BJ (cell line): ENCODE measurements at regions of chr1 and their contacts with region 1.

Region 1: GRCh38 chr1:201792534-201793305 is 36.2 kb upstream of the IPO9 start:
- DNase-seq: peak; percentile 29
- H3K4me3 ChIP-seq: no peak overlapping the region
- H3K27me3 ChIP-seq: no peaks in the 10 kb centered on the region
- CTCF ChIP-seq: peak; percentile 97

Region 2: GRCh38 chr1:201530741-201531531 is 261.8 kb before region 1 on chr1:
- CTCF ChIA-PET with region 1: interaction called, 103 read pairs
- POLR2A ChIA-PET with region 1: interaction called, 3 read pairs
- DNase-seq: peak; percentile 81
- H3K4me3 ChIP-seq: no peak overlapping the region
- H3K27me3 ChIP-seq: no peaks in the 10 kb centered on the region
- CTCF ChIP-seq: peak; percentile 89

Region 3: GRCh38 chr1:201625226-201625761 is 167.4 kb before region 1 on chr1:
- CTCF ChIA-PET with region 1: interaction called, 11 read pairs
- POLR2A ChIA-PET with region 1: no interaction called
- DNase-seq: peak; percentile 97
- H3K4me3 ChIP-seq: no peak overlapping the region
- H3K27me3 ChIP-seq: no peaks in the 10 kb centered on the region
- CTCF ChIP-seq: peak; percentile 57

Region 4: DNA sequence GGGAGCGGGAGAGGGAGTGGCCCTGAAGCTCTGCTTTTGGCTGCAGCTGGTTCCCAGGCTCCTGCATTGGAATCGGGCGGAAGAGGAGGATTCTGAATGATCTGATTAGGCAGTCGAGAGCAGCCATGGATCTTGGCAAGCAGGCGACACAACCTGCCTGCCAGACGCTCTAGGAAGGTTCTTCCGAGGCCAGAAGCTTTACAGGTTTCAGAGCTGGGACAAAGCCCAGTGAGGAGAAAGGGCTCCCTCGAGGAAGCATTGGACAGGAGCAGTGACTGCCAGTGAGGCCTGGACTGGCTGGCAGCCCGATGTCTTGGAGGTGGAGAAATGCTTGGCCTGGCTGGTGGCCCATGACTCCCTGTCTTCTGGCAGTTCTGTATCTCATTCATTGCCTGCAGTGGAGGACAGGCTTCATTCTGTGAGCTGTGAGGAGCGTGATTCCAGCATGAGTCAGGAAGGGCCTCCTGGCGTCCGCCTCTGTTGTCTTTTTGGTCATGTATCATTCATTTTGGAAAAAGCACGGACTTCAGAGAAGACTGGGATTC is 96.4 kb before region 1 on chr1:
- CTCF ChIA-PET with region 1: interaction called, 15 read pairs
- POLR2A ChIA-PET with region 1: no interaction called
- DNase-seq: peak; percentile 85
- H3K4me3 ChIP-seq: no peak overlapping the region
- H3K27me3 ChIP-seq: no peaks in the 10 kb centered on the region
- CTCF ChIP-seq: 0 out of 2 replicates have a peak, but pooled peaks have one; percentile 10

Region 5: GRCh38 chr1:201719812-201720521 is 72.8 kb before region 1 on chr1:
- CTCF ChIA-PET with region 1: interaction called, 495 read pairs
- POLR2A ChIA-PET with region 1: no interaction called
- DNase-seq: peak; percentile 68
- H3K4me3 ChIP-seq: no peak overlapping the region
- H3K27me3 ChIP-seq: no peaks in the 10 kb centered on the region
- CTCF ChIP-seq: no peak

Region 6: DNA sequence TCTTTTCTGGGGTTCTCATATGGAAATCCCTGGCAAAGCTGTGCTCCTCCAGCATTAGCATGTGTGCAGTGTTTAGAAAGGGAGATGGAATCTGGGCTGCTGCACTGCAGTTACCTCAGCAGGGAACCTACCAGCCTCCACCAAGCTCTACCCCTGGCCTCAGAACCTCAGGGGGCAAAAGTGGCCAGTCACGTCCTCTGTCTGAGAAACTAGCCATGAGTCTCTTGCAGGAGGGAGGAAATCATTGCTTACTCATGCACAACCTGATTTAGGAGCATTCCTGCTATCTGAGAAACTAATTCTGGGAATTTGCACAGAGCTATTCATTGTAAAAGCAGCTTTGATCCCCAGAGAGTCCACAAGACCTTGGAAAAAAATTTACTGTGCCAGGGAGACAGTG is 44.4 kb before region 1 on chr1:
- CTCF ChIA-PET with region 1: interaction called, 64 read pairs
- POLR2A ChIA-PET with region 1: no interaction called
- DNase-seq: peak; percentile 81
- H3K4me3 ChIP-seq: no peak overlapping the region
- H3K27me3 ChIP-seq: no peaks in the 10 kb centered on the region
- CTCF ChIP-seq: no peak

Region 7: GRCh38 chr1:201766131-201766866 is 26.4 kb before region 1 on chr1:
- CTCF ChIA-PET with region 1: interaction called, 21 read pairs
- POLR2A ChIA-PET with region 1: interaction called, 3 read pairs
- DNase-seq: peak; percentile 86
- H3K4me3 ChIP-seq: no peak overlapping the region
- H3K27me3 ChIP-seq: no peaks in the 10 kb centered on the region
- CTCF ChIP-seq: no peak

Region 8: DNA sequence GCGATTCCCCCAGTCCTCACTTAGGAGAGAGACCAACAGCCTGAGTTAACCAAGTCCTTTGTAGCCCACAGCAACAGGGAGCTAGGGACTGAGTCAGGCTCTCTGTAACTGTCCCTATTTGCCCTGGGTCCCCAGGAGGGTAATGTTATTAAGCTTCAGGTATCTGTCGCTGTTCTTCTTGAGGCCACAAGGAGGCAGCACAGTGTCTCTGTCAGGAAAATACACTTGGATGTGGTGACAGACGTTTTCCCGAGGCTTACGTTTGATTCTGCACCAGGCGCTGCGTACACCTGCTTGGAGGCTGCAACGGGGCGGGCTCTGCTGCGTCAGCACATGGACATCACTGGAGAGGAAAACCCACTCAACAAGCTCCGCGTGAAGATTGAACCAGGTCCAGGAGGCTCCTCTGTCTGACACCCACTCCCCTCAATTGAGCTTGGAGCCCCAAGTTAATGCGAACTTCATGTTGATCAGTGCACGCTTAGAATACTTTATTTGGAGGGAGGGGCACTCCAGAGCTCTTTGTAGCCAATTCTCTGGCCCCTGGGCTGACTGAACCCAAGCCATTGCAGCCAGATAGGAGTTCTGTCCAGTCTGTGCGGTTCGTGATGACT is 207.0 kb after region 1 on chr1:
- CTCF ChIA-PET with region 1: no interaction called
- POLR2A ChIA-PET with region 1: no interaction called
- DNase-seq: no peak
- H3K4me3 ChIP-seq: no peak overlapping the region
- H3K27me3 ChIP-seq: no peaks in the 10 kb centered on the region
- CTCF ChIP-seq: peak; percentile 76